Ascending aorta (tissue), 2 donors: ENCODE measurements at regions of chr18 and their contacts with region 1.

Region 1: GRCh38 chr18:77054606-77055428 is 77.8 kb downstream of the MBP start:
- DNase-seq: peak; percentile 69 to 87
- H3K4me3 ChIP-seq: no peak overlapping the region
- H3K27ac ChIP-seq: peak overlapping the region; percentile 60 to 66
- H3K4me1 ChIP-seq: peaks cover 3 to 9% of the 10 kb centered on the region in 2 donors
- H3K27me3 ChIP-seq: no peaks in the 10 kb centered on the region
- CTCF ChIP-seq: peak; percentile 42 to 61 (median 61)

Region 2: DNA sequence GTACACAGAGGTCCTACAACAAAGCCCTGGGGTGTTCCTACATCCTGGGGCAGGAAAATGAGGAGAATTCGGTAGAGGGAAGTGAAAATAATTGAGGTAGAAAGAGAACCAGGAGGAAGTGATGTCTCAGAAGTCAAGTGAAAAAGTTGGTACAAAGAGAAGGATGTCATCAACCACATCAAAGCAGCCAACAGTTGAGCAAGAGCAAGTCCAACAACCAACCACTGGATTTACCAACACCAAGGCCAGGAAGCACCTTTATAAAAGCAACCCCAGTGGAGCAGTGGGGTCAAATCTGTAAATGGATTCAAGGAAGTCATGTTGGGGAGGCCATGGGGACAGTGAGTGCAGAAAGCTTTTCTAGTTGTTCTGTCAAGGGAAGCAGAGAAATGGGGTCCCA is 920.2 kb before region 1 on chr18:
- intact Hi-C with region 1: no loop called
- DNase-seq: no peak
- H3K4me3 ChIP-seq: no peak overlapping the region
- H3K27ac ChIP-seq: no peak overlapping the region
- H3K4me1 ChIP-seq: no peaks in the 10 kb centered on the region
- H3K27me3 ChIP-seq: no peaks in the 10 kb centered on the region
- CTCF ChIP-seq: no peak

Region 3: DNA sequence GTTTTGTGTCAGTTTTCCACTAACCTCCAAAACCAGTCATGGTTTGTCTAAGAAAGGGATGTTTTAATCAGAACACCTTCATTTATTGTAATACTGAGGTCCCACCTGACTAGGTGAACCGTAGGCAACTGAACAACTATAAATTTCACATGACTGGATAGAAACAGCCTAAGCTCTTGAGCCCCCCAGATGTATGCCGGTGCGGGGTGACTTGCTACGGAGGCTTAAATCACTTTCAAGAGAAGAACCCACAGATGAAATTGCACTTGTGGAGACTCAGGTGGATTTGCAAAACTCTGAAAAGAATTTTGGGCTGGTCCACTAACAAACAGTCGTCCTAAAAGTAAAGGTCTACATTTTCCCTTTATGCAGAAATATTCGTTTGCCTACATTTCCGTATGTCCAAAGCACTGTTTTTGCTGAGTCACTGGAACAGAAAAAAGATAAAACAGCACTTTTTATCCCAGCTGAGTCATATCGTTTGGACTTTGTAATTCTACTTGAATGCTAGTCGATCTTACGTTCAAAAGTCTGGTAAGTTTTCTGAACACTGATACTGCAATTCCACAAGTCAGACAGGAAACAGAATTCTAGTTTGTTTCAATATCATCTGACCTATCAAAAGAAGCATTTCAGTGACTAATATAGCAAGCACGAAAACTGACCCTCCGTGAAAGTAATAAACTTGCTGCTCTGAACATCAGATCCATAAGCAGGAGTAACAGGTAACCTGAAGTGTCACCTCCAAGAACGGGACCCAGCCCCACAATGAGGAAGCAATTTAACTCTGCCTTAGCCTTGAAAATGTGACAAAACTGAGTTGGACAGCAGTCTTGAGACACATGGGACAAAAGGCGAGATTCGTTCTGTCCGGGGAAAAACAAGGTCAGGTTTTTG is 577.9 kb before region 1 on chr18:
- intact Hi-C with region 1: no loop called
- DNase-seq: no peak
- H3K4me3 ChIP-seq: peak overlapping the region; percentile 28 to 48
- H3K27ac ChIP-seq: peak overlapping the region; percentile 42 to 63
- H3K4me1 ChIP-seq: peaks cover 0 to 9% of the 10 kb centered on the region in 2 donors
- H3K27me3 ChIP-seq: no peaks in the 10 kb centered on the region
- CTCF ChIP-seq: no peak

Region 4: DNA sequence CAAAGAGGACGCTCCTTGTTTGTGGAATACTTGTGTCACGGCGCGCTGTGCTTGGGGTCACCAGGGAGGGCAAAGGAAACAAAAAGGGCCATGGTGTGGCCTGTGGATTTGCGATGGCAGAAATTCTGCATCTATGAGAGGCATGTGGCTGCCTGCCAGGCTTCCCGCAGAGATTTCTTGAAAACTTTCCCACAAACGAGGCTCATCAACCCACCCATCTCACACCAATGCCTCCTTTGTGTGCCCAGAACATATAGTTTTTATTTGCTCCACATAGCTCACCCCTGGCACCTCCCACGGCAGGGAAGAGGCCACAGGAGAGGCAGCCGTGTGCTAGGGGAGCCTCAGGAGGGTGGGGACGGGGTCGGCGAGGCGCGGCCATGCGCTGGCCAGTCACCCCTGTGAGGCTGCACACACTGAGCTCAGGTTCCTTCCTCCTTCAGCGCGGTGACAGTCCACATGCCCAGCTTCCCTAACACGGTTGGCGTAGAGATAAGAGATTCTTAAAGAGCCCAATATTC is 22.6 kb before region 1 on chr18:
- intact Hi-C with region 1: no loop called
- DNase-seq: no peak
- H3K4me3 ChIP-seq: no peak overlapping the region
- H3K27ac ChIP-seq: no peak overlapping the region
- H3K4me1 ChIP-seq: no peaks in the 10 kb centered on the region
- H3K27me3 ChIP-seq: no peaks in the 10 kb centered on the region
- CTCF ChIP-seq: no peak

Region 5: DNA sequence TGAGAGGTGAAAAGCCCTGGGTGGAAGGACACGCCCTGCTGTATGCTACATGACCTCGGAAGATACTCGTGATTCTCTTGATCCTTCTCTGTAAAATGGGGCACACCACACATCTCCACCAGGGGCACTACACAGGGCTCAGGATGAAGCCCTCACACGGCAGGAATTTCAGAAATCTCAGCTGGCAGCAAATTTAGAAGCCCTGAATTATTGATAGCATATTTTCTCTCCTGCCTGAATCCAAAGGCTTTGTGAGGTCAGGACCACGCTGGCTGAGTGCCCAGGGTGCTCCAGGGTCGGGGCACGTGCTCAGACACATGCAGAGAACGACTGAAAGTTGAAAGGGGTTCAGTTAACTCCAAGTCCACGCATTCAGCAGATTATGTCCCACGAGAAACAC is 152.7 kb after region 1 on chr18:
- intact Hi-C with region 1: loop called (anchors 5 kb)
- DNase-seq: peak; percentile 35 to 82
- H3K4me3 ChIP-seq: no peak overlapping the region
- H3K27ac ChIP-seq: peak overlapping the region; percentile 70 to 75
- H3K4me1 ChIP-seq: peaks cover 0 to 15% of the 10 kb centered on the region in 2 donors
- H3K27me3 ChIP-seq: no peaks in the 10 kb centered on the region
- CTCF ChIP-seq: peak; percentile 57 to 68 (median 65)